Naive thymus-derived CD4-positive, alpha-beta T cell (primary cell): ENCODE measurements at regions of chr1 and their contacts with region 1.

Region 1: GRCh38 chr1:15526490-15527339 is at the start of gene DNAJC16:
- DNase-seq: peak; percentile 75 to 98 (median 96)
- ATAC-seq: peak; percentile 50
- H3K4me3 ChIP-seq: peak within 1 kb of the TSS; percentile 78
- H3K4me3 Mint-ChIP-seq: peak within 1 kb of the TSS; percentile 82 to 100 (median 91)
- H3K27ac ChIP-seq: peak within 1 kb of the TSS; percentile 100
- H3K27ac Mint-ChIP-seq: peak within 1 kb of the TSS; percentile 90 to 100 (median 100)
- H3K4me1 ChIP-seq: peaks cover 21 to 28% of the 10 kb centered on the region in 2 donors
- H3K4me1 Mint-ChIP-seq: peaks cover 33 to 71% (median 60%) of the 10 kb centered on the region in 7 donors
- H3K27me3 ChIP-seq: no peaks in the 10 kb centered on the region
- H3K27me3 Mint-ChIP-seq: no peaks in the 10 kb centered on the region
- total RNA-seq, gene DNAJC16: 17.8 to 29.4 (median 25.0) TPM

Region 2: GRCh38 chr1:15578921-15579682 is 52.4 kb after region 1 on chr1:
- CTCF ChIA-PET with region 1: no interaction called
- POLR2A ChIA-PET with region 1: interaction called, 13 read pairs
- intact Hi-C with region 1: loop called (anchors 1 kb)
- DNase-seq: peak in 8 of 9 donors; percentile 32 to 83 (median 76)
- ATAC-seq: peak; percentile 89
- H3K4me3 ChIP-seq: peak overlapping the region; percentile 33
- H3K4me3 Mint-ChIP-seq: peak overlapping the region; percentile 51 to 83 (median 76)
- H3K27ac ChIP-seq: peak overlapping the region; percentile 75
- H3K27ac Mint-ChIP-seq: peak overlapping the region; percentile 91 to 99 (median 96)
- H3K4me1 ChIP-seq: peaks cover 27 to 58% of the 10 kb centered on the region in 2 donors
- H3K4me1 Mint-ChIP-seq: peaks cover 29 to 62% (median 46%) of the 10 kb centered on the region in 7 donors
- H3K27me3 ChIP-seq: no peaks in the 10 kb centered on the region
- H3K27me3 Mint-ChIP-seq: no peaks in the 10 kb centered on the region

Region 3: DNA sequence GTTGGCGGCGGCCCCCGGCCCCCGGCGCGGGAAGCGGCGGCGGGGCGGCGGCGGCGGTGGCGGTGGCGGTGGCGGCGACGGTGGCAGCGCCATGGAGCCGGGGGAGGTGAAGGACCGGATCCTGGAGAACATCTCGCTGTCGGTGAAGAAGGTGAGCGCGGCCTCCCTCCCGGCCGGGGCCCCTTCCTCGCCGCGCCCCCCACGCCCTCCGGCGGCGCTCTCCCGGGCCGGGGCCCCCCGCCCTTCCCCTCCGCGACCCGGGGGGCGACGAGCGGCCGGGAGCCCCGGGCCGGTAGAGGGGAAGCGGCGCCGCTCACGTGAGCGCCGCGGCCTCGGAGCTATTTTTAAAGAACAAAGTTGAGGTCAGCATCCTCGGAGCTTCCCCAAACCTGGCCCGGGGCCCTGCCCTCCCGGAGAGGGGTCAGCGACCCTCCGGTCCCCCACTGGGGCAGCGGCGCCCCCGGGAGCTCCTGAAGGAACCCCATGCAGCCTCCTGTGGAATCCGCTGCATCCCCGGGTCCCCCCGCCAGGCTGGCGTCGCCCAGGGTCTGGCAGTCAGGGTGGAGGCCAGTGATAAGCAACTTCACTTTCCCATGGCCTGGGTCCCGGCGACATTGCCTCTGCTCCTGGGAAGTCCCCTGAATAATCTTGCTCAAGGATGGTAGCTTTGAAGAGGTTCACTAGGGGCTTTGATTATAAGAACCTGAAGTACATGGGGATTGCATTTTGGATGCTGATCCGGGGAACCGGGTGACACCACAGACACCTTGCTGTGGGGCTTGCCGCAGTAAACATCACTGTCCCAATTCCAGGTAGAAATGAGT is 158.0 kb after region 1 on chr1:
- CTCF ChIA-PET with region 1: no interaction called
- POLR2A ChIA-PET with region 1: no interaction called
- intact Hi-C with region 1: loop called (anchors 1 kb)
- DNase-seq: peak; percentile 15 to 54 (median 33)
- ATAC-seq: peak; percentile 54
- H3K4me3 ChIP-seq: peak overlapping the region; percentile 68
- H3K4me3 Mint-ChIP-seq: peak overlapping the region; percentile 90 to 96 (median 94)
- H3K27ac ChIP-seq: peak overlapping the region; percentile 77
- H3K27ac Mint-ChIP-seq: peak overlapping the region; percentile 45 to 98 (median 95)
- H3K4me1 ChIP-seq: peaks cover 17% of the 10 kb centered on the region in 2 donors
- H3K4me1 Mint-ChIP-seq: peaks cover 25 to 42% (median 30%) of the 10 kb centered on the region in 7 donors
- H3K27me3 ChIP-seq: no peaks in the 10 kb centered on the region
- H3K27me3 Mint-ChIP-seq: no peaks in the 10 kb centered on the region

Region 4: GRCh38 chr1:16206547-16207317 is 680.0 kb after region 1 on chr1:
- CTCF ChIA-PET with region 1: no interaction called
- POLR2A ChIA-PET with region 1: no interaction called
- intact Hi-C with region 1: loop called (anchors 2 kb)
- DNase-seq: peak; percentile 85 to 95 (median 93)
- ATAC-seq: peak; percentile 94
- H3K4me3 ChIP-seq: peak overlapping the region; percentile 74
- H3K4me3 Mint-ChIP-seq: peak overlapping the region; percentile 83 to 95 (median 90)
- H3K27ac ChIP-seq: peak overlapping the region; percentile 81
- H3K27ac Mint-ChIP-seq: peak overlapping the region; percentile 87 to 98 (median 95)
- H3K4me1 ChIP-seq: peaks cover 9 to 15% of the 10 kb centered on the region in 2 donors
- H3K4me1 Mint-ChIP-seq: peaks cover 7 to 17% (median 13%) of the 10 kb centered on the region in 7 donors
- H3K27me3 ChIP-seq: no peaks in the 10 kb centered on the region
- H3K27me3 Mint-ChIP-seq: no peaks in the 10 kb centered on the region

Region 5: DNA sequence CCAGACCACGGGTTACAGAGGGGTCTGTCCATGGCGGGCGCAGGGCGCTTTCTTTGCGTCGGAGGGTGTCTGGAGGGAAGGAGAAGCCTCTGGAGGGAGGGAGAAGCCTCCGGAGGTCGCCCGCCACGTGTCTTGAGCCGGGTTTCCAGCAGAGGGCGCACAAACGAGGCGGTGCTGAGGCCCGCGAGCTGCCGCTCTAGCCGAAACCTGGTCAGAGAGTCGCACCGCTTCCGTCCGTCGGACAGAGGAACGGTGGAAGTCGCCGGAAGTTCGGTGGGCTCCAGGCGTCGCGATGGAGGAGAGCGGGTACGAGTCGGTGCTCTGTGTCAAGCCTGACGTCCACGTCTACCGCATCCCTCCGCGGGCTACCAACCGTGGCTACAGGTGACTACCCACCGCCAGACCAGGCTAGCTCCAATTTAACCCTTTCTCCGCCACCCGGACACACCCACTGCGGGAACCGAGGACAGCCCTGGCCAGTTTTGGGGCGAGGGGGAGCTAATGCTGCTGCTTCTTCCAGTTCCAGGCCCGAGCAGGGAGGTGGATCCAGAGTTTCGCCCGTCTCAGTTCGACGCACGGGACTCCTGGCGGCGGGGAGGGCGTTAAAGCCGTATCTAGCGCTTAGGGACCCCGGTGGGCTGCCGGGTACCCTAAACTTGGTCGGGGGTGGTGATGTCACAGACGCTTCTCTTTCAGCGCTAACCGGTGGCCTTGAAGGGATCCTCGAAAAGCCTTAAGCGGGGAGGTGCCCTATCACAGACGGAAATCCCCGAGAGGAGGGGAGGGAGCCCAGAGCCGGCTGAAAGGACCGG is 914.0 kb after region 1 on chr1 and contains the start of gene NECAP2:
- CTCF ChIA-PET with region 1: no interaction called
- POLR2A ChIA-PET with region 1: no interaction called
- intact Hi-C with region 1: loop called (anchors 2 to 5 kb)
- DNase-seq: peak; percentile 79 to 95 (median 88)
- ATAC-seq: peak; percentile 95
- H3K4me3 ChIP-seq: peak within 1 kb of the TSS; percentile 94
- H3K4me3 Mint-ChIP-seq: peak within 1 kb of the TSS; percentile 93 to 100 (median 97)
- H3K27ac ChIP-seq: peak within 1 kb of the TSS; percentile 100
- H3K27ac Mint-ChIP-seq: peak within 1 kb of the TSS; percentile 88 to 98 (median 96)
- H3K4me1 ChIP-seq: peaks cover 17 to 33% of the 10 kb centered on the region in 2 donors
- H3K4me1 Mint-ChIP-seq: peaks cover 19 to 45% (median 34%) of the 10 kb centered on the region in 7 donors
- H3K27me3 ChIP-seq: no peaks in the 10 kb centered on the region
- H3K27me3 Mint-ChIP-seq: no peaks in the 10 kb centered on the region
- total RNA-seq, gene NECAP2: 98.2 to 161 (median 148) TPM

Region 6: DNA sequence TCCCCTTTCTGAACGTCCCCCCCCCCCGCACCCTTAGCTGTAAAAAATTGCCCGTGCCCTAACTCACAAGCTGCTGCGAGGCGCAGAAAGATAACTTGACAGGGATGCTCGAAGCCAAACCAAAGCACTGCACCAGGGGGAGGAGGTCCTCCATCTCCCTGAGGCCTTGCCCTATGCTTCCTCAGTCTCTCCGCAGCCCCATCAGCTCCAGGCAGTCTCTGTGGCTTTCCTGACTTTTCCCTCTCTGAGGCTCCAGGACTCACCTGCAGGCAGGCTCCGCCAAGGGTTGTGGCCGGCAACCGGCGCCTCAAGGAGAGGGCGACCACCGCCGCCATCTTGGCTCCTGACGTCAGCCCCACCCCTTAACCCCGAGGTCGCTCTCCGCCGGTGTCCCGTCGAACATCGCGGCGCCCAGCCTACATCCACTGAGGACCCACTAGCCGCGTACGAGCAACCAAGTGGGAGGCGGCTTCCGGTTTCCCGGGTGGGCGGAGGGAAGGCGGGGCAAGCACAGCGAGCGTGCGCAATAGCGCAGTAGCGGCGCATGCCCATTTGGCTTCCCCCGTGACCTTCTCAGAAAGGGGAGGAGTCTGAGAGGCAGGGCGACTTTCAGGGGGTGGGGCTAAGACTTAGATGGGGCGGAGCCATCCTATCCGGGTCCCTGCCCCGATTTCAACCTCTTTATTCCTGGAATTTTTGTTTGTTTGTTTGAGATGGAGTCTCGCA is 1527.1 kb after region 1 on chr1 and contains the start of gene SDHB:
- CTCF ChIA-PET with region 1: no interaction called
- POLR2A ChIA-PET with region 1: no interaction called
- intact Hi-C with region 1: loop called in 1 of 2 experiments (anchors 2 kb)
- DNase-seq: peak; percentile 97 to 100 (median 100)
- ATAC-seq: peak; percentile 99
- H3K4me3 ChIP-seq: peak within 1 kb of the TSS; percentile 77
- H3K4me3 Mint-ChIP-seq: peak within 1 kb of the TSS; percentile 87 to 99 (median 98)
- H3K27ac ChIP-seq: peak within 1 kb of the TSS; percentile 81
- H3K27ac Mint-ChIP-seq: peak within 1 kb of the TSS; percentile 94 to 99 (median 97)
- H3K4me1 ChIP-seq: peaks cover 13 to 14% of the 10 kb centered on the region in 2 donors
- H3K4me1 Mint-ChIP-seq: peaks cover 8 to 39% (median 33%) of the 10 kb centered on the region in 7 donors
- H3K27me3 ChIP-seq: no peaks in the 10 kb centered on the region
- H3K27me3 Mint-ChIP-seq: peaks cover 0 to 7% (median 6%) of the 10 kb centered on the region in 5 donors
- total RNA-seq, gene SDHB: 53.3 to 81.3 (median 61.1) TPM